Gastrocnemius medialis (tissue), 4 donors: ENCODE measurements at regions of chr7 and their contacts with region 1.

Region 1: GRCh38 chr7:91089382-91089963 is 174.8 kb upstream of the FZD1 start:
- DNase-seq: no peak
- ATAC-seq: peak in 1 of 2 donors; percentile 39
- H3K4me3 ChIP-seq: peak overlapping the region; percentile 38 to 46 (median 42)
- H3K27ac ChIP-seq: no peak overlapping the region
- H3K4me1 ChIP-seq: peaks cover 0 to 3% of the 10 kb centered on the region in 2 donors
- H3K27me3 ChIP-seq: no peaks in the 10 kb centered on the region
- CTCF ChIP-seq: peak; percentile 43 to 77 (median 51)
- POLR2A ChIP-seq: no peak

Region 2: DNA sequence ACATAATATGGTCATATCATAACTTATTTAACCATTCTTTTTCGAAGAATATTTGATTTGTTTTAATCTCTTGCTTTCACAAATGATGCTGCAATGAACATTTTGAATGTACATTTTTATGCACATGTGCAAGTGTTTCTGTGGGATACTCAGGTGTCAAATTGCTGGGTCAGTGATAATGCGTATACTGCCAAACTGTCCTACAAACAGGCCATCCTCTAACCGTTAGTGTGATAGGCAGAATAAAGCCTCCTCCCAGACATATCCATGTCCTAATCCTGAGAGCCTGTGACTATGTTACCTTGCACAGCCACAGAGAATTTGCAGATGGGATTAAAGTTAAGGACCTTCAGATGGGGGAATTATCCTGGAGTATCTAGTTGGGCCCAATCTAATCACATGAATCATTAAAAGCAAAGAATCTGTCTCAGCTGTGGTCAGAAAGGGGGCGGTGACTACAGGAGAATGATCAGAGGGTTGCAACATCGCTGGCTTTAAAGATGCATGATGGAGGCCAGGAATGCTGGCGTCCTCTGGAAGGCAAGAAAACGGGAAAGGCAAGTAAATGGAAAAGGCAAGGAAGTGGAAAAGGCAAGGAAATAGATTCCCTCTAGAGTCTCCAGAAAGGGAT is 221.5 kb after region 1 on chr7:
- in situ Hi-C with region 1: no loop called
- intact Hi-C with region 1: no loop called
- DNase-seq: peak in 1 of 2 donors; percentile 39
- ATAC-seq: peak; percentile 55 to 66
- H3K4me3 ChIP-seq: no peak overlapping the region
- H3K27ac ChIP-seq: no peak overlapping the region
- H3K4me1 ChIP-seq: no peaks in the 10 kb centered on the region
- H3K27me3 ChIP-seq: no peaks in the 10 kb centered on the region
- CTCF ChIP-seq: no peak
- POLR2A ChIP-seq: no peak

Region 3: DNA sequence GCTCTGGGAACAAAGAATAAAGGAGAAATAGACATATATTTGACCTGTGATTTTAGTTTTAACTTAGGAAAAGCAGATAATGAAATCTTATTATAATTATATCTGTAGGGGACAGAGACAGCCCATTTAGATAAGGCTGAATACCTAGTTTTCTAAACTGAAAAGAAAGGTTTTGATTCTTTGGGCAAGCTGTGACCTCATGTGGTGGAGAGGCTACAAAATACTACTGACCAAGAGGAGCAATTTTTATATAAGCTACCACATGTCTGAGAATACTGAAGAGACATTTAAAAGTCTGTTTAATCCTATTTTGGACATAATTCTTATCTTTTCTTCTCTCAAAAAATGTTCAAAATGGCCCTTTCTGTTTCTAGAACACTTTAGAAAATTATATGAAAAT is 520.1 kb after region 1 on chr7:
- in situ Hi-C with region 1: loop called in 2 of 4 experiments (anchors 25 kb)
- intact Hi-C with region 1: no loop called
- DNase-seq: no peak
- ATAC-seq: no peak
- H3K4me3 ChIP-seq: no peak overlapping the region
- H3K27ac ChIP-seq: no peak overlapping the region
- H3K4me1 ChIP-seq: no peaks in the 10 kb centered on the region
- H3K27me3 ChIP-seq: no peaks in the 10 kb centered on the region
- CTCF ChIP-seq: no peak
- POLR2A ChIP-seq: no peak

Region 4: DNA sequence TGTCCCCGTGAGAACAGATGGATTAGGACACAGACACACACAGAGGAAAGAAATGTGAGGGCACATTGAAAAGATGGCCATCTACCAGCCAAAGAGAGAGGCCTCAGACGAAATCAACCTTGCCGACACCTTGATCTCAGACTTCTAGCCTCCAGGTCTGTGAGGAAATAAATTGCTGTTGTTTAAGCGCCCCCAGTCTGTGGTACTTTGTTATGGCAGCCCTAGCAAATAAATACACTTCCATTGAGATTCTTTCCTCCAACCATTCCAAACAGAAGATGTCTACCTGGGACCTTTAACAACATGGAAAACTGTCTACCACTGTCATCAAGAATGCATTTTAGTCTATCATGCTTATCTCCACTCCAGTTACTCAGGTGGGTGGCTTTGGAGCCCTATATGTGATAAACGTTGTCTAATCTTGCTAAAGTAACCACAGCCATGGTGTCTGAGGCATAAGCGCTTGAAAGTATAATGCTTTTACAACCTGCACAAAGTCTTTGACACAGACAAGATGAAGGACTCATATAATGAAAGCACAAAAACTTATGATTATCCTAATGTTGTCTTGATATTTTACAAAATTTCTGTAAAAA is 546.8 kb after region 1 on chr7:
- in situ Hi-C with region 1: no loop called
- intact Hi-C with region 1: loop called (anchors 10 kb)
- DNase-seq: no peak
- ATAC-seq: no peak
- H3K4me3 ChIP-seq: no peak overlapping the region
- H3K27ac ChIP-seq: no peak overlapping the region
- H3K4me1 ChIP-seq: no peaks in the 10 kb centered on the region
- H3K27me3 ChIP-seq: no peaks in the 10 kb centered on the region
- CTCF ChIP-seq: peak in 4 of 5 experiments; percentile 20 to 48 (median 34)
- POLR2A ChIP-seq: no peak

Region 5: GRCh38 chr7:91784463-91784862 is 695.0 kb after region 1 on chr7:
- in situ Hi-C with region 1: loop called in 1 of 4 experiments (anchors 10 kb)
- intact Hi-C with region 1: no loop called
- DNase-seq: no peak
- ATAC-seq: no peak
- H3K4me3 ChIP-seq: no peak overlapping the region
- H3K27ac ChIP-seq: no peak overlapping the region
- H3K4me1 ChIP-seq: no peaks in the 10 kb centered on the region
- H3K27me3 ChIP-seq: no peaks in the 10 kb centered on the region
- CTCF ChIP-seq: peak in 1 of 5 experiments; percentile 16
- POLR2A ChIP-seq: no peak

Region 6: GRCh38 chr7:91880413-91881241 is 791.2 kb after region 1 on chr7 and contains the start of gene MTERF1:
- in situ Hi-C with region 1: no loop called
- intact Hi-C with region 1: loop called (anchors 10 kb)
- DNase-seq: peak; percentile 63 to 81
- ATAC-seq: peak; percentile 88 to 98
- H3K4me3 ChIP-seq: peak within 1 kb of the TSS; percentile 66 to 80 (median 76)
- H3K27ac ChIP-seq: peak within 1 kb of the TSS in 3 of 4 donors; percentile 16 to 59 (median 40)
- H3K4me1 ChIP-seq: peaks cover 0 to 11% of the 10 kb centered on the region in 2 donors
- H3K27me3 ChIP-seq: no peaks in the 10 kb centered on the region
- CTCF ChIP-seq: peak; percentile 85 to 94 (median 87)
- POLR2A ChIP-seq: no peak
- total RNA-seq, gene MTERF1: 3.3 to 5.5 (median 3.7) TPM